ENCODE measurements at regions of chr3 and their contacts with region 1.

Region 1: DNA sequence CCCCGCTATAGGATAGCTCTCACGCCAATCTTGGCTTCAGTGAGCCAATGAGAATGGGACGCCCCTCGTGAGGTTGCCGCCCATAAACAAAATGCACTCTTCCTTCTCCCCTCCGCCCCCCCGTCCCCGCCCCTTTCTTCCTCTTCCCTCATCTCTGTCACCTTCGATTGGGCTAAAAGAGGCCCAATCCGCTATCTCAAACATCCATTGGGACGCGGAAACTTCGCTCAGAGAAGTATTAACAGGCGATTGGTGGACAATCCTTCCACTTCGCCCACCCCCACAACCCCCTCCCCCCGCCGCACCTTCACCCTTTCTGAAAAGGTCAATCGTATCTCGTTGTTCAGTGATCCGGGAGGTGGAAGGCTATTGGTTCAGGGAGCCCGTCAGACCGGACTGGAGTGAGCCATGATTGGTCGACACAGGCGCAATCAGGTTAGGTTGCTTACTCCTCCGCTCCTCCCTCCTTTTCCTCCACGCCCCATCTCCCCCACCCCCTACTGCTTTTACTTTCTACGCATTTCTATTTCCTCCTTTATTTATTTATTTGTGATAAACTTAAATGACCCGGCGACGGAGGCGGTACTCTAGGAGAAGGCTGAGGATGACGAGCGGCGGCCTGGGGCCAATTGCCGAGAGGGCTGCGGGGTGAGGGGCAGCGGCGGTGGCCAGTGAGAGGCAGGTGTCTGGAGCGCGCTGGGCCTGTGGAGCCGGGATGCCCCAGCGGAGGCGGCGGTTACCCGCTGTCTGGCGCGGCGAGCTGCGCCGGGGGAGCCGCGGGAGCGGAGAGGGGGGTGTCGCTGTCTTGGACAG is 447 bp upstream of the ZBTB20 start:
- DNase-seq: peak; percentile 99
- H3K4me3 ChIP-seq: peak overlapping the region; percentile 90 to 95
- H3K27ac ChIP-seq: peak overlapping the region; percentile 99
- H3K4me1 ChIP-seq: no peaks in the 10 kb centered on the region
- H3K27me3 ChIP-seq: no peaks in the 10 kb centered on the region
- CTCF ChIP-seq: peak in 1 of 4 experiments; percentile 30
- POLR2A ChIP-seq: peak; percentile 93

Region 2: GRCh38 chr3:113745273-113746068 is 1402.1 kb before region 1 on chr3:
- intact Hi-C with region 1: loop called (anchors 5 kb)
- DNase-seq: peak; percentile 89
- H3K4me3 ChIP-seq: peak overlapping the region; percentile 85 to 93
- H3K27ac ChIP-seq: peak overlapping the region; percentile 99
- H3K4me1 ChIP-seq: no peaks in the 10 kb centered on the region
- H3K27me3 ChIP-seq: no peaks in the 10 kb centered on the region
- CTCF ChIP-seq: peak in 3 of 4 experiments; percentile 66 to 89 (median 79)
- POLR2A ChIP-seq: peak; percentile 63

Region 3: DNA sequence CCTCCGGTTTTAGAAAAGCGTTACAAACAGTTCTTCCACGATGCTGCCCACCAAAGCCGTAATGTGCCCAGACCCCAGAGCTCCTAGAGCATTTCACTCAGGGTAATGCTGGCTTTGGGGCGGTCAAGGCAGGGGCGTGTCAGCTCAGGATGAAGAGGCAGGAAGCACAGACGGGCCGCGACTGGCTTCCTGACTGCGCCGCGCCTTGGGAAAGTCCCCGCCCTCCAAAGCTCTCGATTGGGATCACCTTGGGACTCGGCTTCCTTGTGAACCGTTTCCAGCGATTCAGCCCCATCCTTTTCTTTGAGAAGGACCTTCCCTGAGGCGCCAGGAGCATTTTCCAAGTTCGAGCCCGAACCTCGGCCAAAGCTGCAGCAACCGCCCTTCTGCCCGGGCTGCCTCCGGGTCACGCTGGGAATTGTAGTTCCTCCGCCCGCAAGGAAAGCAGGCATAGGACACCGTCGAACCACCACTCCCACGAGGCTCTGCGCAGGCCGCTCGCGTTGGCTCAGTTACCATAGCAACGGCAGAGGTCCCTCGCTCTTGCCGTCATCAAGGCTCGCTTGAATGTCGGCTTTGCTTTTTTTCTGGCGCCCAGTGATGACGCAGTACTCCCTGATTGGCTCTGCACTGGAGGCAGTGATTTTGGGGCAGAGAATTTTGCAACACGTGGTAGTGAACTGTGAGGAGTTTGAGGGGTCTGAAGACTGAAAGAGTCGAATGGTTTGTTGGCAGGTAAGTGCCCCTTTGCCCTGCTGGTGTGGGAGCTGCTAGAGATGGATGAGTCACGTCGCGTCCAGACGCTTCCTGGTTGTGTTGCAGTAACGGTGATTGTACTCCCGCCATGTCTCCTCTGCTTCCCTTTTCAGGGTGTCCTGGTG is 1091.2 kb before region 1 on chr3 and contains the starts of genes CCDC191 and QTRT2:
- intact Hi-C with region 1: loop called (anchors 5 kb)
- DNase-seq: peak; percentile 99
- H3K4me3 ChIP-seq: peak within 1 kb of the TSS; percentile 60 to 74
- H3K27ac ChIP-seq: peak within 1 kb of the TSS; percentile 80 to 83
- H3K4me1 ChIP-seq: peaks cover 12% of the 10 kb centered on the region
- H3K27me3 ChIP-seq: no peaks in the 10 kb centered on the region
- CTCF ChIP-seq: peak in 2 of 4 experiments; percentile 20 to 23
- POLR2A ChIP-seq: peak; percentile 25
- total RNA-seq, gene CCDC191: 4.6 to 8.1 TPM
- total RNA-seq, gene QTRT2: 11.7 to 20.8 TPM

Region 4: DNA sequence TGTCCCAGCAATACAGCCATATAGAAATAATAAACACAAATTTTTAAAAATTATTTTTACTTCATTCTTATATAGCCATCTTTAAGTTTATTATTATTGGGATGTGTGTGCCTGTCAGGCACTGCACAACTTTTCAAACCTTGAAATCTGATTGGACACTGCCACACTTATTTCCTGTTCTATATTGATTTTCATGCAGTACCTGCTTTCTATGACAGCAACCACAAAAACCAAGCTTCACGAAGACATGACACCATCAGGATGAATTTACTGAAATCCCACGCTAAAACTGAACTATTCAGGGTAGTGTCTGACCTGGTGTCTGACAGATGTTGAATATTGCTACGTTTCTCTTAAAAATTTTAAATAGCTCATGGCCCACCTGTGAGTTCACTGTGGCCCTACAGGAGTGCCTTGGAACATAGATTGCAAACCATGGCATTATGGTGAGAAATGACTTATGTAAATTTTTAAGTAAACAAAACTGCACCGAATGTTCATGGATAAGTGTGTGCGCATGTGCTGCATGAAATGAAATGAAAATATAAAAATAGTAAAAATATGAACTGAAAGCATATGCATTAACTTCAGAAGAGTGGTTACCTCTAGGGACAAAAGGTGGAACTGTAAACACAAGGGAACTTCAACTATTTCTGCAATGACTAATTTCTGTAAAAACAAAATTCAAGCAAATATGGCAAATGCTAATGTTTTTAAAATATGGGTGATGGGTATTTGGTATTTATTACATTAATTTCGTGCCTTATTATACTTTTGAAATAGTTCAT is 152.8 kb before region 1 on chr3:
- intact Hi-C with region 1: no loop called
- DNase-seq: no peak
- H3K4me3 ChIP-seq: no peak overlapping the region
- H3K27ac ChIP-seq: no peak overlapping the region
- H3K4me1 ChIP-seq: no peaks in the 10 kb centered on the region
- H3K27me3 ChIP-seq: no peaks in the 10 kb centered on the region
- CTCF ChIP-seq: no peak
- POLR2A ChIP-seq: no peak

Region 5: GRCh38 chr3:115040673-115041286 is 106.8 kb before region 1 on chr3:
- intact Hi-C with region 1: loop called (anchors 10 kb)
- DNase-seq: no peak
- H3K4me3 ChIP-seq: no peak overlapping the region
- H3K27ac ChIP-seq: no peak overlapping the region
- H3K4me1 ChIP-seq: no peaks in the 10 kb centered on the region
- H3K27me3 ChIP-seq: no peaks in the 10 kb centered on the region
- CTCF ChIP-seq: peak in 3 of 4 experiments; percentile 10 to 48 (median 31)
- POLR2A ChIP-seq: no peak

Region 6: DNA sequence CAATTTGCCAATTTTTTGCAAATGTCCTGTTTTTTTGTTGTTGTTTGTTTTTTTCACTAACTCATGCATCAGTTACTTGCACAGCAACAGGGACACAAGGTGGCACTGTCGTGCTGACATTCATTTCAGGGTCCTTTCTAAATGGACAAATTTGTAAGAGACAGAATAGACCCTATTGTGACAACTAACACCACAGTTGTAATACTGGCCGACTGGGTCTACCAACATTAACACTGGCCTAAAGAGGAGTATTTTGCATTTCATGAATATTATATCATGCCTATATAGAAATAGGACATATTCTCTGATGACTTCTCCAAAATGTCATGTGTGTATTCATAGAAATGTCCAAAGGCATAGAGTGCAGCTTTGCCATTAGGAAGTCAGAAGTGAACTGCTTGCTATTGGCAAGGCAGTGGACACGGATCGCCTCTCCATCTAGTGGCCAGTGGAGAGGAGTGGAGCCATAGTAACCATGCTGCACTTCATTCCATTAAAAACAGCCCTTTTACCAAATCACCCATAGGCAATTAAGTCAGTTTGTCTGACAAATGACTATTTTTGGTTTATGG is 55.2 kb before region 1 on chr3:
- intact Hi-C with region 1: loop called (anchors 5 kb)
- DNase-seq: peak; percentile 62
- H3K4me3 ChIP-seq: no peak overlapping the region
- H3K27ac ChIP-seq: peak overlapping the region; percentile 10 to 29
- H3K4me1 ChIP-seq: peaks cover 4% of the 10 kb centered on the region
- H3K27me3 ChIP-seq: no peaks in the 10 kb centered on the region
- CTCF ChIP-seq: peak; percentile 24 to 75 (median 64)
- POLR2A ChIP-seq: no peak

Region 7: DNA sequence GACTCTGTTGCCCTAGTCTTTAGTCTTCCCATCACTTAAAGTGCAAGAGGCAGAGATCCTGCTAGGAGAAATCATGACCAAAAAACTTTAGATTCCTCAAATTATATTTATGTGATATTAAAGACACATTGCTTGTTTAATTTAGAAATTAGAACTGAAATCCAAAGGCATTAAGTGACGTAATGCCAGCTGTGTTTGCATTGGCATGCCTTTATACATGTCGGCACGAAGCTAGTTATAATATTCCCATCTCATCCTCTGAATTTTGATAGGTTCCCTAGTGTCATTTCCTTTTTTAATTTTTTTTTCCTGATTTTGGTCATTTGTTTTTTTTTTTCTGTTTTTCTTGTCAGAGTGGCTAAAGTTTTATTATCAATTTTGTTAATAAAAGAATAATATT is 203.1 kb after region 1 on chr3:
- intact Hi-C with region 1: no loop called
- DNase-seq: no peak
- H3K4me3 ChIP-seq: no peak overlapping the region
- H3K27ac ChIP-seq: no peak overlapping the region
- H3K4me1 ChIP-seq: no peaks in the 10 kb centered on the region
- H3K27me3 ChIP-seq: no peaks in the 10 kb centered on the region
- CTCF ChIP-seq: no peak
- POLR2A ChIP-seq: no peak

Measured in prostate gland (tissue), 2 donors.